Adrenal gland (tissue), 19 donors: ENCODE measurements at regions of chr5 and their contacts with region 1.

Region 1: GRCh38 chr5:151740336-151740942 is 18.0 kb downstream of the ATOX1 start:
- DNase-seq: peak; percentile 77 to 92 (median 91)
- H3K4me3 ChIP-seq: peak overlapping the region in 1 of 4 donors; percentile 11
- H3K27ac ChIP-seq: peak overlapping the region; percentile 1 to 86 (median 81)
- H3K4me1 ChIP-seq: peaks cover 29 to 39% of the 10 kb centered on the region in 2 donors
- H3K27me3 ChIP-seq: no peaks in the 10 kb centered on the region
- CTCF ChIP-seq: peak; percentile 84 to 93 (median 90)
- POLR2A ChIP-seq: peak in 1 of 2 donors; percentile 54

Region 2: GRCh38 chr5:151463137-151464029 is 277.1 kb before region 1 on chr5:
- intact Hi-C with region 1: loop called in 1 of 2 experiments (anchors 10 kb)
- DNase-seq: peak in 1 of 7 donors; percentile 43
- H3K4me3 ChIP-seq: no peak overlapping the region
- H3K27ac ChIP-seq: no peak overlapping the region
- H3K4me1 ChIP-seq: no peaks in the 10 kb centered on the region
- H3K27me3 ChIP-seq: no peaks in the 10 kb centered on the region
- CTCF ChIP-seq: peak in 2 of 6 experiments; percentile 16 to 26
- POLR2A ChIP-seq: no peak

Region 3: GRCh38 chr5:151509836-151510235 is 230.6 kb before region 1 on chr5:
- intact Hi-C with region 1: loop called in 1 of 2 experiments (anchors 10 kb)
- DNase-seq: no peak
- H3K4me3 ChIP-seq: no peak overlapping the region
- H3K27ac ChIP-seq: no peak overlapping the region
- H3K4me1 ChIP-seq: no peaks in the 10 kb centered on the region
- H3K27me3 ChIP-seq: no peaks in the 10 kb centered on the region
- CTCF ChIP-seq: no peak
- POLR2A ChIP-seq: no peak

Region 4: DNA sequence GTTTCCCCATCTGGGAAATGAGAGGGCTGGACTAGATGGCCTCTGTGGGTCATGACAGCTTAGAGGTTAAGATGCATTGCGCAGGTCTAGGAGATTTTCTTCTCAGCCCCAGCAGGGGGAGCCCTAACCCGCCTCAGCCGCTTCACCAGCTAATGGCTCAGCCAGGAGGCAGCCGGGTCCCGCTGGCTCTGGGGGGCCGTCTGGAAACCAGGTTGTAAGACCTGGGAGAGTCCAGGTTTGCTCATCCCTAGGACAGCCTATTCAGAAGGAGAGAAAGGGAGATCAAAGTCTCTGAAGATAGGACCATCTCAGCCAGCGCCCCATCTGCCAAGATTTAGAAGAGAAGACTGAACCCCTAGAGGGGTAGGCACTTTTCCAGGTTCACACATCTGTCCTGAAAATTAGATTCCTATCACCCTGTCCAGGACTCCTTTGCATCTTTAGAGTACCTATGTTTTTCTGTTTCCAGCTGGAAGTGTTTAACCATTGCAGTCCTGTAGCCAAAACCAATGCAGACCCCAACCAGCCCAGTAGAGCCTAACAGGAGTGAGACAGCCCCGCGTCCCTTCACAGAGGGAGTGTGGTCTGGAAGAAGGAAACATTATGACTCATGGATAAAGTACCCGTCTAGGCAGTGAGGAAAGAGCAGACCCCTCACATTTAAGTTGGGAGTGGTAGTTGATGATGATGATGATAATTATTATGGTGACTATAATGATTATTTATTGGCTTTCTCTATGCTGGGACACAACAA is 81.3 kb before region 1 on chr5:
- intact Hi-C with region 1: loop called (anchors 2 to 5 kb)
- DNase-seq: peak; percentile 76 to 90 (median 84)
- H3K4me3 ChIP-seq: no peak overlapping the region
- H3K27ac ChIP-seq: peak overlapping the region in 2 of 5 donors; percentile 9 to 21
- H3K4me1 ChIP-seq: peaks cover 4 to 31% of the 10 kb centered on the region in 2 donors
- H3K27me3 ChIP-seq: no peaks in the 10 kb centered on the region
- CTCF ChIP-seq: peak; percentile 78 to 94 (median 89)
- POLR2A ChIP-seq: no peak

Region 5: GRCh38 chr5:151870820-151871219 is 130.4 kb after region 1 on chr5:
- intact Hi-C with region 1: no loop called
- DNase-seq: no peak
- H3K4me3 ChIP-seq: no peak overlapping the region
- H3K27ac ChIP-seq: no peak overlapping the region
- H3K4me1 ChIP-seq: no peaks in the 10 kb centered on the region
- H3K27me3 ChIP-seq: no peaks in the 10 kb centered on the region
- CTCF ChIP-seq: no peak
- POLR2A ChIP-seq: no peak